Dendritic cell treated with granulocyte-macrophage colony-stimulating factor and Interleukin-4, amounts not matched to agents 40 ng/mL and 50 ng/mL, for 4 days (primary cell): ENCODE measurements at regions of chr14 and their contacts with region 1.

Region 1: DNA sequence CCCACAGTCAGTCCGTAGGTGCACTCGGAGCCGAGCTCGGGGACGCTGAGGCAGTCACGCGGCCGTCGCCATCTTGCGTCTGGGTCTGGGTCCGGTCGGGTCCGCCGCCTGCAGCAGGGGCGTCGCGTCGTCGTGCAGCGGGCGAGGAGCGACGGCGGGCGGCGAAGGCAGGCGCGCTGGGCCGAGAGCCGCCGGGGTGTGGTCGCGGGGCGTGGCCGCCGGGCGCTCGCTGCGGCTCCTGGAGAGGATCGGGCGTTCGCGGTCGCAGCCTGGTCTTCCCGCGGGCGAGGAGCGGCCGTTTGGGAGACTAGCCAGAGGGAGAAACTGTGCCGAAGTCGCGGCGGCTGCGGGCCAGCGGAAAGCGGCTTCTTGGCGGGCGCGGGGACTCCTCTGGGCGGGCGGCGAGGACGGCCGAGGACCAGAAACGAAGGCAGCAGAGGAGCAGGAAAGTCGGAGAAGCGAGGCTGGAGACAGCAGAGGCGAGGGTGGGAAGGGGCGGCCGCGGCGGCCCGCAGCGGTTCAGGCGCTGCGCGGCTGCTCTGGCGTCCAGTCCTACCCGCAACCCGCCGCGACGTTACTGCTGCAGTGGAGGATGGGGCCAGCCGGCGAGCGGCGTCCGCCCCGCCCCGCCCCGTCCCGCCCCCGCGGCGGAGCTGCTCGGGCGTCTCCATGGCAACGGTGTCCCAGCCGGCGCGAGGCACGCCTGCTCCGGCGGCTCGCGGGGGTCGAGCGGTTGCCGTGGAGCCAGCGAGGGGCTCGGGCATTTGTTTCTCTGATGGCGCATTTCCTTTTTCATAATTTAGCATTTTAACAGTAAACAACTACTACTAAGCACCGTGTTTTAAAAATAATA is at the start of gene PNMA1:
- H3K4me3 Mint-ChIP-seq: peak within 1 kb of the TSS; percentile 97
- H3K27ac Mint-ChIP-seq: peak within 1 kb of the TSS; percentile 91
- H3K4me1 Mint-ChIP-seq: peaks cover 32% of the 10 kb centered on the region
- H3K27me3 Mint-ChIP-seq: peaks cover 20% of the 10 kb centered on the region

Region 2: DNA sequence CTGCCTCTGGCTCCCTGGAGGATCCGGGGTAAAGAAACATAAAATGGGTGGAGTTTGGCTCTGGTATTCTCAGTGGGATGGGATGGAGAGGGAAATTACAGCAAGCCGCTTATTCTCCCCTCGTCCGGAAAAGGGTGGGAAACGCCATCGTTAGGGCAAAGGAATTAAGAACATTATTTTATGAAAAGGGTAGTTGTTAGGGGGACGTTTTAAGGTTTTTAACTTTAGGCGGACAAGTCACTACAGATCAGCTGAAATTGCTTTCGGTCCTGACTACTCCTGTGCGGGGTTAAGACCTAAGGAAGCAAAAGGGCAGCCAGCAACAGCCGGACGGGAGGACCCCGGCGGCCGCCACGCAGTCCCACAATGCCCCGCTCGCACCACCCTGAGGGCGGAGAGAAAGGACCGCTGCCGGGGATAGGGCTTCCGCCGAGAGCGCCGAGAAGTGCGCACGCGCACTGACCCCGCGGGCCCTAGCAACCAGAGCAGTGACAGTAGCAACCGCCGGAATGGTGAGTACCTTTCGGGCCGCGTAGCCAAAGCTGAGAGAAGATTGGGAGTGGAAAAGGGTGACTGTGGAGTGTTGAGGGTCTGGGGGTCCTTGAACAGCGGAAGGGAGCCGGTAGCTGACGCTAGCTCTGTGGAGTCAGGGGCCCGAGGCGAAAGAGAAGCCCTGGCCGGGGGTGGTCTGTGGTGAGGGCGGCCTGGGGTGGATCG is 69.3 kb before region 1 on chr14 and contains the start of gene DNAL1:
- intact Hi-C with region 1: loop called (anchors 10 kb)
- H3K4me3 Mint-ChIP-seq: peak within 1 kb of the TSS; percentile 90
- H3K27ac Mint-ChIP-seq: peak within 1 kb of the TSS; percentile 83
- H3K4me1 Mint-ChIP-seq: peaks cover 17% of the 10 kb centered on the region
- H3K27me3 Mint-ChIP-seq: no peaks in the 10 kb centered on the region

Region 3: GRCh38 chr14:73802431-73803188 is 88.6 kb after region 1 on chr14:
- intact Hi-C with region 1: no loop called
- H3K4me3 Mint-ChIP-seq: no peak overlapping the region
- H3K27ac Mint-ChIP-seq: no peak overlapping the region
- H3K4me1 Mint-ChIP-seq: no peaks in the 10 kb centered on the region
- H3K27me3 Mint-ChIP-seq: no peaks in the 10 kb centered on the region